Naive thymus-derived CD4-positive, alpha-beta T cell (primary cell): ENCODE measurements at regions of chr5 and their contacts with region 1.

Region 1: GRCh38 chr5:131460867-131461572 is 174.0 kb downstream of the RAPGEF6 start:
- DNase-seq: no peak
- ATAC-seq: no peak
- H3K4me3 ChIP-seq: no peak overlapping the region
- H3K4me3 Mint-ChIP-seq: peak overlapping the region in 8 of 10 donors; percentile 24 to 75 (median 58)
- H3K27ac ChIP-seq: no peak overlapping the region
- H3K27ac Mint-ChIP-seq: peak overlapping the region in 8 of 9 donors; percentile 51 to 93 (median 77)
- H3K4me1 ChIP-seq: peaks cover 0 to 16% of the 10 kb centered on the region in 2 donors
- H3K4me1 Mint-ChIP-seq: peaks cover 11 to 89% (median 70%) of the 10 kb centered on the region in 7 donors
- H3K27me3 ChIP-seq: no peaks in the 10 kb centered on the region
- H3K27me3 Mint-ChIP-seq: no peaks in the 10 kb centered on the region

Region 2: GRCh38 chr5:131436081-131436480 is 24.9 kb before region 1 on chr5:
- CTCF ChIA-PET with region 1: no interaction called
- POLR2A ChIA-PET with region 1: no interaction called
- intact Hi-C with region 1: loop called in 1 of 2 experiments (anchors 2 kb)
- DNase-seq: no peak
- ATAC-seq: no peak
- H3K4me3 ChIP-seq: no peak overlapping the region
- H3K4me3 Mint-ChIP-seq: no peak overlapping the region
- H3K27ac ChIP-seq: peak overlapping the region; percentile 40
- H3K27ac Mint-ChIP-seq: peak overlapping the region in 8 of 9 donors; percentile 1 to 84 (median 50)
- H3K4me1 ChIP-seq: no peaks in the 10 kb centered on the region
- H3K4me1 Mint-ChIP-seq: peaks cover 5 to 38% (median 24%) of the 10 kb centered on the region in 7 donors
- H3K27me3 ChIP-seq: no peaks in the 10 kb centered on the region
- H3K27me3 Mint-ChIP-seq: no peaks in the 10 kb centered on the region

Region 3: GRCh38 chr5:131475541-131475941 is 14.5 kb after region 1 on chr5:
- CTCF ChIA-PET with region 1: no interaction called
- POLR2A ChIA-PET with region 1: interaction called, 3 read pairs
- intact Hi-C with region 1: loop called in 1 of 2 experiments (anchors 2 kb)
- DNase-seq: no peak
- ATAC-seq: no peak
- H3K4me3 ChIP-seq: no peak overlapping the region
- H3K4me3 Mint-ChIP-seq: peak overlapping the region in 1 of 10 donors; percentile 5
- H3K27ac ChIP-seq: no peak overlapping the region
- H3K27ac Mint-ChIP-seq: peak overlapping the region in 6 of 9 donors; percentile 14 to 62 (median 28)
- H3K4me1 ChIP-seq: peaks cover 6 to 8% of the 10 kb centered on the region in 2 donors
- H3K4me1 Mint-ChIP-seq: peaks cover 8 to 76% (median 66%) of the 10 kb centered on the region in 7 donors
- H3K27me3 ChIP-seq: no peaks in the 10 kb centered on the region
- H3K27me3 Mint-ChIP-seq: no peaks in the 10 kb centered on the region

Region 4: DNA sequence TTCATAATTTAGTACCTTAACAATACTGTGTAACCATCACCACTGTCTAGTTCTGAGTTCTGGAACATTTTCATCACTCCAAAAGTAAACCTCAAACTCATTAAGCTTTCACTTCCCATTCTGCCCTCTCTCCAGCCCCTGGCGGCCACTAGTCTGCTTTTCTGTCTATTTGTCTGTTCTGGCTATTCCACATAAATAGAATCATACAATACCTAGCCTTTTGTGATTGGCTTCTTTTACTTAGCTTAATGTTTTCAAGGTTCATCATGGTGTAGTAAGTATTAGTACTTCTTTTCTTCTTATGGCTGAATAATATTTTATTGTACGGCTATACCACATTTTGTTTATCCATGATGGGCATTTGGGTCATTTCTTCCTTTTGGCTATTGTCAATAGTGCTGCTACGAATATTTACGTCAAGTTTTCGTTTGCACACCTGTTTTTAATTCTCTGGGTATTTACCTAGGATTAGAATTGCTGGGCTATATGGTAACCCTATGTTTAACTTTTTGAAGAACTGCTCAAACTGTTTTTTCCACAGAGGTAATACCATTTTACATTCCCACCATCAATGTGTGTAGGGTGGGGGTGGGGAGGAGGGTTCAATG is 35.5 kb after region 1 on chr5:
- CTCF ChIA-PET with region 1: no interaction called
- POLR2A ChIA-PET with region 1: no interaction called
- intact Hi-C with region 1: no loop called
- DNase-seq: no peak
- ATAC-seq: peak; percentile 34
- H3K4me3 ChIP-seq: no peak overlapping the region
- H3K4me3 Mint-ChIP-seq: no peak overlapping the region
- H3K27ac ChIP-seq: no peak overlapping the region
- H3K27ac Mint-ChIP-seq: peak overlapping the region in 6 of 9 donors; percentile 48 to 76 (median 64)
- H3K4me1 ChIP-seq: no peaks in the 10 kb centered on the region
- H3K4me1 Mint-ChIP-seq: peaks cover 16 to 62% (median 49%) of the 10 kb centered on the region in 7 donors
- H3K27me3 ChIP-seq: no peaks in the 10 kb centered on the region
- H3K27me3 Mint-ChIP-seq: no peaks in the 10 kb centered on the region